ENCODE measurements at regions of chr6 and their contacts with region 1.

Region 1: GRCh38 chr6:47545223-47545622 is 67.6 kb downstream of the CD2AP start:
- DNase-seq: no peak
- ATAC-seq: peak; percentile 36; the same call in 1 of the 2 replicates
- H3K4me3 Mint-ChIP-seq: no peak overlapping the region
- H3K27ac Mint-ChIP-seq: no peak overlapping the region
- H3K4me1 Mint-ChIP-seq: no peaks in the 10 kb centered on the region
- H3K27me3 Mint-ChIP-seq: no peaks in the 10 kb centered on the region
- CTCF ChIP-seq: no peak

Region 2: DNA sequence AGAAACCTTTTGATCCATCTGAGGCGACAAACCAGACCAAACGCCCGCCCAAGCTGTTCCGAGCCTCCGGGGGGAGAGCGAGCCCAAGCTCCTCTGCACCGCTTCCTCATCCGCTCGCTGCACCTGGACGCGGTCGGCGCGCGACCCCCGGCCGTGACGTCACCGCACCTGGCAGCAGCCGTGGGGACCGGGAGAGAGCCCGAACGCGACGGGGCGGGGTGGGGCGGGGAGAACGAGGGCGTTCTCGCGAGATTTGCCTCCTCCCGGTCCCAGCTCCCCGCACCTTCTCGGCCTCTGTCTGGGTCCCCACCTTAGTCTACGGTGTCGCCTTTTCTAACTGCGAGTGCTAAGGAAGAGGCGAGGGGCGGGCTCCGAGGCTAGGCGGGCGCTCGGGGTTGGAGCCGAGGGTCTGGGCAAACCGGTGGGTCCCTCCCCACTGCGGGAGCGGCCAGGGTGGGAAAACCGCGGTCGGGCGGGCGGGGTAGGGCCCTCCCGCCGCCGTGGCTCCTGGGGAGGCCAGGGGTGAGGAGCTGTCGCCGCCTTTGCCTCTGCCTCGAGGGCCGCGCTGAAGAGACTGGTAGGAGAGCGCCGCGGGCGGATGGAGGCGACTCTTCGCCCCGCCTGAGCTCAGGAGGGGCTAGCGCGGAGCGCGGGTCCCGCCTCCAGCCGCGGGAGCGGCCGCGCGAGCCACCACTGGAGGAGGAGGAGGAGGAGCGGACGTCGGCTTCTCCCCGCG is 67.6 kb before region 1 on chr6 and contains the start of gene CD2AP:
- CTCF ChIA-PET with region 1: no interaction called
- POLR2A ChIA-PET with region 1: interaction called, 13 read pairs
- DNase-seq: peak; percentile 97
- ATAC-seq: peak; percentile 91
- H3K4me3 Mint-ChIP-seq: peak within 1 kb of the TSS; percentile 96
- H3K27ac Mint-ChIP-seq: peak within 1 kb of the TSS; percentile 100
- H3K4me1 Mint-ChIP-seq: peaks cover 40% of the 10 kb centered on the region
- H3K27me3 Mint-ChIP-seq: no peaks in the 10 kb centered on the region
- CTCF ChIP-seq: no peak
- total RNA-seq, gene CD2AP: 62.3 to 77.0 TPM (median 62.3 TPM) in 3 replicates